ENCODE measurements at regions of chr11 and their contacts with region 1.

Region 1: GRCh38 chr11:17098038-17098437 is 20.6 kb upstream of the RPS13 start:
- DNase-seq: no peak
- ATAC-seq: no peak
- H3K4me3 ChIP-seq: no peak overlapping the region
- H3K27ac ChIP-seq: peak overlapping the region in 1 of 2 donors; percentile 36
- H3K4me1 ChIP-seq: no peaks in the 10 kb centered on the region
- H3K27me3 ChIP-seq: no peaks in the 10 kb centered on the region

Region 2: DNA sequence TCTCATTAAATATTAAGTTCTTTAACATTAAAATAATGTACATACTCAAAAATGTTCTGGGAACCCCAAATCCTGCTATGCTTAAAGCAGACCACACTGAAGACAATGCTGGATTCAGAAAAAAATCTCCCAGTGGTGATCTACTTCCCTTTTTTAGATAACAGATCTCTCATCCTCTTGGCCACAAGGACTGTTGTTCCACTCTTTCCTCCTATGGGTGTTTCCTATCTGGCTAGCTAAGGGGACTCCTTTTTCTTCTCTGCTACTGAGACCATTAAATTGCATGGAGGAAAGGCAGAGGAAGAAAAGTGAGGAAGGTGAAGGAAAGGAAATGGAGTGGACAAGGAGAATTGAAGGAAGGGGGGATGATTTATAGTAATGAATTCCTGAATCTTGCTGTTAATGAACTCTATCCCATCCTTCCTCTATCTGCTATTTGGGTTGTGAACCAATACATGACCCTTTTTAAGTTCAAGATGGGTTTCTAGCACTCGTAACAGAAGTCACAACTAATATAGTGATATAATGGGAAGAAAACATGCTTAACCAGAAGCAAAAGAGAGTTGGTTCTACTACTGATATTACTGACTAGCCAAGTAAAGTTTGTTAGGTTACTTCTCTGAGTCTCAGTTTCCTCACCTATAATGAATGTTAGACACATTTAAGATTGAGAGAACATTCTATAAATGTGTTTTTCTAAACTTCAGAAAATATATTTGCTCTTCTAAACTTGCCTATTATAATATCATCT is 56.5 kb after region 1 on chr11:
- intact Hi-C with region 1: loop called in 1 of 2 experiments (anchors 10 kb)
- DNase-seq: no peak
- ATAC-seq: no peak
- H3K4me3 ChIP-seq: no peak overlapping the region
- H3K27ac ChIP-seq: peak overlapping the region in 1 of 2 donors; percentile 76
- H3K4me1 ChIP-seq: peaks cover 4 to 5% of the 10 kb centered on the region in 2 donors
- H3K27me3 ChIP-seq: no peaks in the 10 kb centered on the region